Activated T-helper 2 cell treated with anti-CD3 and anti-CD28 coated beads, Interferon-gamma antibody, Interleukin-2, Interleukin-4, amounts not matched to agents 10 μg/mL and 5 μg/mL and 100 μg/mL, durations not matched to agents 14 hours and 24 hours and 36 hours (primary cell): ENCODE measurements at regions of chr9 and their contacts with region 1.

Region 1: DNA sequence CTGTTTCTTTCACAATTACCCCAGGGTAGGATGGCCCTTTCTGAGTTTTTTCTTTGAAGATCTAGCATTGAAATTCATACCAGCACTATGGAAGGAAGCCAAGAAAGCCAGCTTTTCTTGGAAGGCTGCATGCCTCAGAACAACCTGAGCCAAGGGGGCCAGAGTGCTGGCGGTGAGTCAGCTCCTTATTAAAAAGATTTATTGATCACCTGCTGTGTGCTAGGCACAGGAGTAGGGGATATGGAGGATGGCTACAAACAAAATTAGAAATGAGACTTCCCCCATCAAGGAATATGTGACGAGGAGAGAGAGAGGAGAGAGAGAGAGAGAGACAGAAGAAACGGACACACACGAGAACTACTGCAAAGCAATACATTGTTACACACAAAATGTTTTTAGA is 184.6 kb upstream of the PUM3 start:
- DNase-seq: no peak
- H3K4me3 Mint-ChIP-seq: no peak overlapping the region
- H3K27ac Mint-ChIP-seq: no peak overlapping the region
- H3K4me1 Mint-ChIP-seq: no peaks in the 10 kb centered on the region
- H3K27me3 Mint-ChIP-seq: no peaks in the 10 kb centered on the region

Region 2: GRCh38 chr9:2955575-2955974 is 73.0 kb before region 1 on chr9:
- intact Hi-C with region 1: no loop called
- DNase-seq: no peak
- H3K4me3 Mint-ChIP-seq: no peak overlapping the region
- H3K27ac Mint-ChIP-seq: no peak overlapping the region
- H3K4me1 Mint-ChIP-seq: no peaks in the 10 kb centered on the region
- H3K27me3 Mint-ChIP-seq: peaks cover 4% of the 10 kb centered on the region

Region 3: GRCh38 chr9:3099646-3100045 is 71.1 kb after region 1 on chr9:
- intact Hi-C with region 1: loop called (anchors 10 kb)
- DNase-seq: no peak
- H3K4me3 Mint-ChIP-seq: no peak overlapping the region
- H3K27ac Mint-ChIP-seq: no peak overlapping the region
- H3K4me1 Mint-ChIP-seq: no peaks in the 10 kb centered on the region
- H3K27me3 Mint-ChIP-seq: no peaks in the 10 kb centered on the region